Activated CD8-positive, alpha-beta memory T cell treated with anti-CD3 and anti-CD28 coated beads, Interleukin-2, amount 10 ng/mL, durations not matched to agents 7 days and 5 days (primary cell): ENCODE measurements at regions of chr7 and their contacts with region 1.

Region 1: GRCh38 chr7:128209229-128210035 is 31.6 kb upstream of the LEP start:
- DNase-seq: peak; percentile 72
- ATAC-seq: peak; percentile 79
- H3K4me3 Mint-ChIP-seq: no peak overlapping the region
- H3K27ac Mint-ChIP-seq: no peak overlapping the region
- H3K4me1 Mint-ChIP-seq: no peaks in the 10 kb centered on the region
- H3K27me3 Mint-ChIP-seq: peaks cover 10% of the 10 kb centered on the region

Region 2: DNA sequence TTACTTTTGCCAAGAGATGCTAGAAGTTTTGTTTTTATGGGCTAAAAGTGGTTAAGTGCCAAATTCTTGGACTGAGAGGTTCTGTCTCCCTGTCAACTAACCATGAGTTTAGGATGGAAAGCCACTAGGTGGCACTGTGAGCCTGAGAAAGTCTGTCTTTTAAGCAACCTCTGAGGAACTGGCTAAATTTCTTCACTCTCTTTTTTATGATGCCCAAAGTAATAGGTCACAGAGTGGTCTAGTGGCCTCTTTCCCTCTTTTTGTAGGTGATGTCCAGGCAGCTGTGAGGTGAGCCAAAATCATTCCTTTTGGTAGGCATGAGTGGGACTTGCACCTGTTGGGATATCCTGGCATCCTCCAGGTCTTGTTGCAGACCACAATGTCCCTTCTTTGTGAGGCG is 500.6 kb before region 1 on chr7:
- CTCF ChIA-PET with region 1: interaction called, 93 read pairs
- DNase-seq: peak; percentile 79
- ATAC-seq: peak; percentile 81
- H3K4me3 Mint-ChIP-seq: no peak overlapping the region
- H3K27ac Mint-ChIP-seq: no peak overlapping the region
- H3K4me1 Mint-ChIP-seq: peaks cover 1% of the 10 kb centered on the region
- H3K27me3 Mint-ChIP-seq: no peaks in the 10 kb centered on the region

Region 3: GRCh38 chr7:128190051-128190647 is 19.3 kb before region 1 on chr7:
- CTCF ChIA-PET with region 1: interaction called, 10 read pairs
- DNase-seq: peak; percentile 34
- ATAC-seq: no peak
- H3K4me3 Mint-ChIP-seq: no peak overlapping the region
- H3K27ac Mint-ChIP-seq: no peak overlapping the region
- H3K4me1 Mint-ChIP-seq: peaks cover 5% of the 10 kb centered on the region
- H3K27me3 Mint-ChIP-seq: peaks cover 47% of the 10 kb centered on the region

Region 4: DNA sequence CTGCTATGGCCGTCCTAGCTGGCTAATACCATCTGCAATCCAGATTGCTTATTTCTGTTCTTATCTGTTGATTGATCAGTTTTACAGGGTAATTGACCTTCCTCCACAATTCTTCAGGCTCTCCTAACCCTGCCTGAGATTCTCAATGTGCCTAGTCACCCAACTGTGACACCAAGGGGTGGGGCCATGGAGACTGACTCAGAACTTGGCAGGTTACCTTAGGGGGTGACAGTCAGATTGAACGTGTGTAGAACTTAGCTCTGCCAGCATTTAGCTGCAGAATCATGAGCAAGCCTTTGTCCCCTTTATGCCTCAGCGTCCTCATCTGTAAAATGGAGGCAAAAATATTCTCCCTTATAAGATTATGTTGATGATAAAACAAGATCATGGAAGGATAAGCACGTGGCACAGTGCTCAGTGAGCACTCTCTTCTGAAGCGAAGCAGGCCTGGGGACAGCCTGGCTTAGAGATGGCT is 12.5 kb after region 1 on chr7:
- CTCF ChIA-PET with region 1: interaction called, 13 read pairs
- DNase-seq: no peak
- ATAC-seq: no peak
- H3K4me3 Mint-ChIP-seq: no peak overlapping the region
- H3K27ac Mint-ChIP-seq: no peak overlapping the region
- H3K4me1 Mint-ChIP-seq: peaks cover 5% of the 10 kb centered on the region
- H3K27me3 Mint-ChIP-seq: peaks cover 49% of the 10 kb centered on the region

Region 5: DNA sequence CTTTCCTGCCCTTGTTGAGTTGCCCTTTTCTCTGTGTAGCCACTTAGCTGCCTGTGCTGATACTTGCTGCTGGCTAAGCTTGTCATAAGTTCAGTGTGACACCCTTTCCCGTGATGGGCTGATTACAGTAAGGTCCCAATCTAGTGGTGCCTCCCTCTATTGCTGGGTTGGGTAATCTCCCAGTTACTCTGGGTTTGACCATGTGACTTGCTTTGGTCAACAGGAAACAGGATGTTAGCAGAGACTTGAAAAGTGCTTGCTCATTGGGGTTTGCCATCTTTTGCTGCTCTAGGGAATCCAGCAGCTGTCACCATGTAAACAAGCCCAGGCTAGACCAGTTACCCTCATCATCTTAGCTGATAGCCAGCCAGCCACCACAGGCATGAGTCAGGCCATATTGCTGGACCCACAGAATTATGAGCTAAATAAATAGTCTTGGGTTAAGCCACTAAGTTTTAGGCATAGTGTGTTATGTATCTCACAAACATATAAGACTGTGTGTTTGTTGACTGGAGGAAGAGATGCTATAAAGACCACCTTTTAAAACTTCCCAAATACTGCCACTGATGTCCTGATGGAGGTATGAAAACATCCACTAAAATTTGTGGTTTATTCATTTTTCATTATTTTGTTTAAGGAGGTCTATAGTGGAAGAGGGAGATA is 27.6 kb after region 1 on chr7:
- CTCF ChIA-PET with region 1: interaction called, 13 read pairs
- DNase-seq: peak; percentile 75
- ATAC-seq: peak; percentile 96
- H3K4me3 Mint-ChIP-seq: no peak overlapping the region
- H3K27ac Mint-ChIP-seq: peak overlapping the region; percentile 71
- H3K4me1 Mint-ChIP-seq: peaks cover 12% of the 10 kb centered on the region
- H3K27me3 Mint-ChIP-seq: peaks cover 20% of the 10 kb centered on the region

Region 6: DNA sequence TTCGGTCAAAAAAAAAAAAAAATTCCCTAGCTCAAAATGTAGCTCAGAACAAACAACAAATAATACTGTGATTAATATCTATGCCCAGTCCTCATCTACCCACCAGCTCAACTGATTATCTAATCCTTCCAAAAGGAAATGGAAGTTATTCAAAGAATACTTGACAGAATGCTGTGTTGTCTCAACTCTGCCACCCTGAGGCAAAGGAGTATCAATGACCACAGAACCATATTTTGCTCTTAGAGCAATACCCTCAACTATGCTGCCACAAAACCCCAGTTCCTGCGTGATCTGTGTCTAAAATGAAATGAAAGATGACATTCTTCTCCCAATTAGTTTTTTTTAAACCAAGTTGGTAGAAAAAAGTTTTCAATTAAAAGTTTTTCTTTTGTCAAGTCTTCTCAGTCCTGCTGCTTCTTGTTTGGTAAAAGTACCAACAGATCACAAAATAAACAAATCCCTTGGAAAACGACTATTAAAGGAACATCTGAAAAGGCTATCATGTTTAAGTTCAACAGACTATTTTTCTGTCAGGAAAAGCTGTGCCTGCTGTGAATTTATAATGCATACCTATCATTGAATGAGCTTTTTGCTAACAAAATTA is 112.7 kb after region 1 on chr7:
- CTCF ChIA-PET with region 1: interaction called, 13 read pairs
- DNase-seq: peak; percentile 71
- ATAC-seq: peak; percentile 63
- H3K4me3 Mint-ChIP-seq: peak overlapping the region; percentile 35
- H3K27ac Mint-ChIP-seq: peak overlapping the region; percentile 99
- H3K4me1 Mint-ChIP-seq: peaks cover 43% of the 10 kb centered on the region
- H3K27me3 Mint-ChIP-seq: no peaks in the 10 kb centered on the region